ENCODE measurements at regions of chr1 and their contacts with region 1.

Region 1: DNA sequence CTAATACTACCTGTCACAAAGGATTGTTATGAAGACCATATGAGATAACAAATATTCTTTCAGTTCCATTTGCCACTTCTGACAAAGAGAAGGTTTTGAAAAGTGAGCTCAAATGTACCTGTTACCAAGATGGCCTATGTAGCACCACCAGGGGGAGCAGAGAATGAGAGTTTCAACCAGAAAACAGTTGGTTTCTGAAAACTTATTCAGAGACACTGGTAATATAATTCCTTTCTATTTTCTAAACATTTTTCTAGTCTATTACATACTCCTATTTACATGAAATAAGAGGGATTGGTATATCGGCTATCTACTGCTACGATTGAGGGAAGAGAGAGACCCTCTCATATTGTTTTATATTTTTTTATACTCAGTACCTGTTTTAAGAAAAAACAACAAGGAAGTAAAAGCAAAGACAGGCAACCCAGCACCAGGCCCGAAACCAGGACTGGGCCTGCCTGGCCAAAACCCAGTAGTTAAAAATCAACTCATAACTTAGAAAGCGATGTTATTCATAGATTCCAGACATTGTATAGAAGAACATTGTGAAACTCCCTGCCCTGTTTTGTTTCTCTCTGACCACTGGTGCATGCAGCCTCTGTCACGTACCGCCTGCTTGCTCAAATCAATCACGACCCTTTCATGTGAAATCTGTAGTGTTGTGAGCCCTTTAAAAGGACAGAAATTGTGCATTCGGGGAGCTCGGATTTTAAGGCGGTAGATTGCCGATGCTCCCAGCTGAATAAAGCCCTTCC is 48.3 kb downstream of the IL23R start:
- DNase-seq: no peak
- H3K4me3 ChIP-seq: no peak overlapping the region
- H3K27ac ChIP-seq: no peak overlapping the region
- H3K4me1 ChIP-seq: peaks cover 0 to 2% (median 0%) of the 10 kb centered on the region in 4 experiments; a peak in 1 of 7 replicates
- H3K27me3 ChIP-seq: no peaks in the 10 kb centered on the region
- CTCF ChIP-seq: peak in 2 of 3 experiments; percentile 64 to 69; a peak in 3 of 4 replicates
- EP300 ChIP-seq: no peak
- POLR2A ChIP-seq: no peak
- RAD21 ChIP-seq: peak; percentile 37 to 61

Region 2: DNA sequence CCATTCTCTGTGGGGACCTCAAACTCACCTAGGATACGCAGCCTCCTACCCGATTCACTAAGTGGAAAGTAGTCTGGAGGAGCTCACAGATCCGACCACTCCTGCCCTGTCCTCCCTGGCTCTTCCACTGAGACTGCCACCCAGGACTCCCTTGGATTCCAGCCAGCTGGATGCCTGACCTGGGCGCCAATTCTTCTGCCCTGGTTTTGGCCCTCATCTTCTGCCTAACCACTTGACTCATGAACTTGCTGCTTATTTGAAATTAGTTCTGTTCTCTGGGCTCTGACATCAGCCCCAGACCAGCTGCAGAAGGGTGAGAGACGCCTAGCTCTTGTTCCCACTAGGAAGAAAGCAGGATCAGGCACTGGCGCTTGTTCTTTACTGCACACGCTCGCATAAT is 209.5 kb before region 1 on chr1:
- CTCF ChIA-PET with region 1: interaction called, 24 read pairs
- POLR2A ChIA-PET with region 1: no interaction called
- DNase-seq: no peak
- H3K4me3 ChIP-seq: no peak overlapping the region
- H3K27ac ChIP-seq: no peak overlapping the region
- H3K4me1 ChIP-seq: no peaks in the 10 kb centered on the region
- H3K27me3 ChIP-seq: no peaks in the 10 kb centered on the region
- CTCF ChIP-seq: no peak
- EP300 ChIP-seq: no peak
- POLR2A ChIP-seq: no peak
- RAD21 ChIP-seq: no peak

Region 3: GRCh38 chr1:67184838-67185421 is 29.7 kb before region 1 on chr1:
- CTCF ChIA-PET with region 1: interaction called, 52 read pairs
- POLR2A ChIA-PET with region 1: no interaction called
- DNase-seq: no peak
- H3K4me3 ChIP-seq: no peak overlapping the region
- H3K27ac ChIP-seq: no peak overlapping the region
- H3K4me1 ChIP-seq: no peaks in the 10 kb centered on the region
- H3K27me3 ChIP-seq: no peaks in the 10 kb centered on the region
- CTCF ChIP-seq: no peak
- EP300 ChIP-seq: no peak
- POLR2A ChIP-seq: no peak
- RAD21 ChIP-seq: no peak

Region 4: GRCh38 chr1:67256291-67257172 is 41.9 kb after region 1 on chr1:
- CTCF ChIA-PET with region 1: interaction called, 12 read pairs
- POLR2A ChIA-PET with region 1: no interaction called
- DNase-seq: no peak
- H3K4me3 ChIP-seq: no peak overlapping the region
- H3K27ac ChIP-seq: no peak overlapping the region
- H3K4me1 ChIP-seq: peaks cover 0 to 8% (median 4%) of the 10 kb centered on the region in 4 experiments; a peak in 2 of 7 replicates
- H3K27me3 ChIP-seq: no peaks in the 10 kb centered on the region
- CTCF ChIP-seq: no peak
- EP300 ChIP-seq: no peak
- POLR2A ChIP-seq: no peak
- RAD21 ChIP-seq: no peak

Region 5: GRCh38 chr1:67323087-67323486 is 108.5 kb after region 1 on chr1:
- CTCF ChIA-PET with region 1: interaction called, 22 read pairs
- POLR2A ChIA-PET with region 1: no interaction called
- DNase-seq: no peak
- H3K4me3 ChIP-seq: no peak overlapping the region
- H3K27ac ChIP-seq: no peak overlapping the region
- H3K4me1 ChIP-seq: peaks cover 0 to 3% (median 0%) of the 10 kb centered on the region in 4 experiments; a peak in 1 of 7 replicates
- H3K27me3 ChIP-seq: no peaks in the 10 kb centered on the region
- CTCF ChIP-seq: no peak
- EP300 ChIP-seq: no peak
- POLR2A ChIP-seq: no peak
- RAD21 ChIP-seq: no peak

Region 6: DNA sequence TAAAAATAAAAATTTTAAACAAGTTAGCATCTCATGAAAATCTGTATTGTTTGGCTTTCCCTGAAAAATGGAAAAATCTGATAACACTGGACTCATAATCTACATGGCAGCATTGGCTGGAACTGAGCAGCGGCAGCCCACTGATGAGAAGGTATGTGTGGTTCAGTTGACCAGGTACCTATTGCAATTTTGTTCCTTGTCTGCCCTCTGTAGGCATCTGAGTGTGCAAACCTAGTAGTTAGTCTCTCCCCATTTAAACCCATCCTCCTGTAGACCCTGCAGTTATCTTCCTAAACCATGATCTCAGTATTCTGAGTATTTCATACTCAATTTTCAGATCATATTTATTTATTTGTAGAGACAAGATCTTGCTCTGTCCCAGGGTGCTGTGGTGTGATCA is 275.0 kb after region 1 on chr1:
- CTCF ChIA-PET with region 1: interaction called, 161 read pairs
- POLR2A ChIA-PET with region 1: no interaction called
- DNase-seq: no peak
- H3K4me3 ChIP-seq: no peak overlapping the region
- H3K27ac ChIP-seq: no peak overlapping the region
- H3K4me1 ChIP-seq: peaks cover 0 to under 1% (median 0%) of the 10 kb centered on the region in 4 experiments; a peak in 2 of 7 replicates
- H3K27me3 ChIP-seq: no peaks in the 10 kb centered on the region
- CTCF ChIP-seq: peak in 2 of 3 experiments; percentile 60 to 64; a peak in 2 of 4 replicates
- EP300 ChIP-seq: no peak
- POLR2A ChIP-seq: no peak
- RAD21 ChIP-seq: peak; percentile 85 to 88

Measured in H1 (cell line).